Ascending aorta (tissue), 2 donors: ENCODE measurements at regions of chr16 and their contacts with region 1.

Region 1: GRCh38 chr16:25014500-25015147 is 545 bp downstream of the ARHGAP17 start:
- DNase-seq: peak in 1 of 2 donors; percentile 71
- H3K4me3 ChIP-seq: peak overlapping the region; percentile 71 to 94
- H3K27ac ChIP-seq: peak overlapping the region; percentile 95 to 96
- H3K4me1 ChIP-seq: peaks cover 8 to 31% of the 10 kb centered on the region in 2 donors
- H3K27me3 ChIP-seq: no peaks in the 10 kb centered on the region
- CTCF ChIP-seq: no peak

Region 2: DNA sequence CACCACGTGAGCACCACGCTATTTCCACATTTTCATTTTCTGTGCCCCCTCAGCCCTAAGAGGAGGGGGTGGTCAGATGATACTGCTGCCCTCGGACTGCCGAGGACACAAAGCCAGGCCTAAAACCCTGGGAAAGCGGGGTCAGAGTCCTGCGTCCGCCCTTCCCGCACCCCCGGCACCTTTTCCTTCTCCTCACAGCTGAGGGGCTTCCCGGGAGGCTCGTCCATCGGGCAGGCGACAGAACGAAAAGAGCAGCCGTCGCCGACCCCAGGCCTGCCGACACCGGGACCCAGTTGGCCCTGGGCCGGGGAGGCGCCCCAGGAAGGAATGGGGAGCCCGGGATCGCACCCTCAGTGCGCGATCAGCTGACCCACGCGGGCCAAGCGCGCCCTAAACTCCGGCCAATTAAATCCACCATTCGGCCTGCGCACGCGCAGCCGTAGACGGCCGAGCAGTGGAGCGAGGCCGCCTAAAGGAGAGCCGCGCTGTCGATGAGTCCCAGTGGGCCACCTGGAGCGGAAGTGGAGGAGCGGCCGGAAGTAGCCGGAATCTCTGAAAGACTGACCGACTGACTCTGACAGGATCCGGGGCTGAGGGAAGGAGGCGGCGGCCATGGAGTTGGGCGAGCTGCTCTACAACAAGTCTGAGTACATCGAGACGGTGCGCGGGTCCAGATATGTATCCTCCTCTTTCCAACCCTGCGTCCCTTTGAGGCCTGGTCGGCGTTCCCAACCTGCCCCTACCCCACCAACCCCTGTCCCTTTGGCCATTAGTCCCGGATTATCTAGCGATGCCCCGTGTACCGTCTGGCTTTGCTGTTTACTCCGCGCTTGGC is 1373.5 kb before region 1 on chr16 and contains the starts of genes DCTN5 and PALB2:
- intact Hi-C with region 1: loop called (anchors 10 kb)
- DNase-seq: peak; percentile 80 to 97
- H3K4me3 ChIP-seq: peak within 1 kb of the TSS; percentile 64 to 99
- H3K27ac ChIP-seq: peak within 1 kb of the TSS; percentile 72 to 86
- H3K4me1 ChIP-seq: peaks cover 5 to 18% of the 10 kb centered on the region in 2 donors
- H3K27me3 ChIP-seq: no peaks in the 10 kb centered on the region
- CTCF ChIP-seq: no peak
- total RNA-seq, gene DCTN5: 16.7 TPM
- total RNA-seq, gene PALB2: 2.1 TPM

Region 3: DNA sequence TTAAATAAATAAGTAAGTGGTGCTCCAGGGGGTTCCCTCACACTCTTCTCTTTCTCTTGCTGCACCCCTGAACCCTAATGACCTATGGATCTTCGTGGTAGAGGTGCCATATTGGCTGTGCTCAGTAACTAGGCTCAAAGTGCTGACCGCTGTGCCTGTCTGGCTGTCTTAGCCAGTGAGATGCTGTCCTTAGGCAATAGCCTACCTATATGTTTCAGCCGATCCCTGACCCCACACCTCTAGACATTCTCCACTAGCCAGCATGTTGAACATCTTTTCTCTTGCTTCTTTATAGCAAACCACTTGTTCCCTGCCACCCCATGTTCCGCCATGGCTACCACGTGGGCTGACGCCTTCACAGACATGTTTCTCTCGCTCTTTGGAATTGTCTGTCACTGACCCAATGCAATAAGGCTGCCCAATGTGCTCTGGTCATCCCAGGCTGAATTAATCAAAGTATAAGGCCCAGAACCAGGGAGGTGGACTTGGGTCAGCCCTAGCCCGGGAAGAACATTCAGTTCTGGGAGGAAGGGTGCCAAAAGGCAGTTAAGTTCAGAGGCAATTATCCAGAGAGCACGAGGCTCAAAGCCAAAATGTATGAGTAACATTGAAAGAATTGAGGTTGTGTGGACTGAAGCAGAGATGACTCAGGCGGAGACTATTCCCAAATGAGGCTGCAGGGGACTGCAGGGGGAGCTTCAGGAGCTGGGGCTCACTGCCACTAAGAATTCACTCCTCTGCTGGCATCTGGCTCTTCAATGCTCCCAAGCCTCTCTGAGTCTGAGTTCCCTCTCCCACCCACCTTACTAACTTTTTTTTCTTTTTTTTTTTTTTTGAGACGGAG is 313.9 kb before region 1 on chr16:
- intact Hi-C with region 1: loop called (anchors 10 kb)
- DNase-seq: peak; percentile 65 to 94
- H3K4me3 ChIP-seq: no peak overlapping the region
- H3K27ac ChIP-seq: peak overlapping the region; percentile 82 to 90
- H3K4me1 ChIP-seq: peaks cover 12 to 24% of the 10 kb centered on the region in 2 donors
- H3K27me3 ChIP-seq: no peaks in the 10 kb centered on the region
- CTCF ChIP-seq: peak; percentile 10 to 33 (median 27)

Region 4: GRCh38 chr16:24988593-24989338 is 25.9 kb before region 1 on chr16:
- intact Hi-C with region 1: loop called (anchors 2 kb)
- DNase-seq: peak in 1 of 2 donors; percentile 67
- H3K4me3 ChIP-seq: peak overlapping the region; percentile 4 to 18
- H3K27ac ChIP-seq: peak overlapping the region; percentile 64 to 84
- H3K4me1 ChIP-seq: peaks cover 28 to 73% of the 10 kb centered on the region in 2 donors
- H3K27me3 ChIP-seq: no peaks in the 10 kb centered on the region
- CTCF ChIP-seq: no peak

Region 5: GRCh38 chr16:25031441-25032307 is 17.1 kb after region 1 on chr16:
- intact Hi-C with region 1: loop called (anchors 1 kb)
- DNase-seq: peak; percentile 76 to 94
- H3K4me3 ChIP-seq: peak overlapping the region; percentile 79 to 93
- H3K27ac ChIP-seq: peak overlapping the region; percentile 44 to 70
- H3K4me1 ChIP-seq: peaks cover 0 to 9% of the 10 kb centered on the region in 2 donors
- H3K27me3 ChIP-seq: no peaks in the 10 kb centered on the region
- CTCF ChIP-seq: no peak